Activated CD4-positive, alpha-beta memory T cell treated with anti-CD3 and anti-CD28 coated beads, Interleukin-2, amount 10 ng/mL, durations not matched to agents 7 days and 5 days (primary cell): ENCODE measurements at regions of chr17 and their contacts with region 1.

Region 1: GRCh38 chr17:8222630-8223356 is 12.4 kb upstream of the AURKB start:
- DNase-seq: peak; percentile 90
- H3K4me3 Mint-ChIP-seq: peak overlapping the region; percentile 95
- H3K27ac Mint-ChIP-seq: peak overlapping the region; percentile 99
- H3K4me1 Mint-ChIP-seq: peaks cover 69% of the 10 kb centered on the region
- H3K27me3 Mint-ChIP-seq: peaks cover 2% of the 10 kb centered on the region

Region 2: DNA sequence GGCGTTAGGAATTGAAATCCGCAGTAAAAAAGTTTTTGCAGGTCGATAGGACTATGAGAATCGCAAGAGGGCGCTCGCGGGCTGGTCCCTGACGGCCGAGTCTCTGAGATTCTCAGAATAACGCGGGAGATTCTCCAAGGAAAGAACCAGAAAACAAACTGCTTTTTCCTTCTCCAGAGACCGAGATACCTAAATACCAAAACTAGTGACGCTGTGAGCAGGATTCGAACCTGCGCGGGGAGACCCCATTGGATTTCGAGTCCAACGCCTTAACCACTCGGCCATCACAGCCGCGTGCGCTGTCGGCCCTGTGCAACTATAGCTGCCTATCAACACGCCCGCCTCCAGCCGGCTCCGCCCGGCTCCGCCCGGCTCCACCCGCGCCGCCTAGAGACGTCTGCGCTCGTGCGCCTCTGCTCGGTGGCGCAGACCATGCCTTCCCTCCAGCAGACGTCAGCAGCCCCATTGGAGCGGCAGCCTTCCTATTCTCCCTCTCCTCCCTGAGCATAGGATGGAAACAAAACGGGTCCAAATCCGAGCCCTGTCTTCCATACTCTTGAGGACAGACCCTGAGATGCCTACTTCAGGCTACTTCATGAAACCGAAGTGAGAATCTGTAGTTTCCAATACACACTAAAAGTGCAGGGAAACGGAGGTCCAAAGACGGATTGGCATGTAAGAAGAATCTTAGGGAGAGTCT is 84.0 kb before region 1 on chr17:
- CTCF ChIA-PET with region 1: interaction called, 6 read pairs
- POLR2A ChIA-PET with region 1: interaction called, 12 read pairs
- DNase-seq: peak; percentile 97
- H3K4me3 Mint-ChIP-seq: no peak overlapping the region
- H3K27ac Mint-ChIP-seq: no peak overlapping the region
- H3K4me1 Mint-ChIP-seq: peaks cover 3% of the 10 kb centered on the region
- H3K27me3 Mint-ChIP-seq: peaks cover 3% of the 10 kb centered on the region

Region 3: DNA sequence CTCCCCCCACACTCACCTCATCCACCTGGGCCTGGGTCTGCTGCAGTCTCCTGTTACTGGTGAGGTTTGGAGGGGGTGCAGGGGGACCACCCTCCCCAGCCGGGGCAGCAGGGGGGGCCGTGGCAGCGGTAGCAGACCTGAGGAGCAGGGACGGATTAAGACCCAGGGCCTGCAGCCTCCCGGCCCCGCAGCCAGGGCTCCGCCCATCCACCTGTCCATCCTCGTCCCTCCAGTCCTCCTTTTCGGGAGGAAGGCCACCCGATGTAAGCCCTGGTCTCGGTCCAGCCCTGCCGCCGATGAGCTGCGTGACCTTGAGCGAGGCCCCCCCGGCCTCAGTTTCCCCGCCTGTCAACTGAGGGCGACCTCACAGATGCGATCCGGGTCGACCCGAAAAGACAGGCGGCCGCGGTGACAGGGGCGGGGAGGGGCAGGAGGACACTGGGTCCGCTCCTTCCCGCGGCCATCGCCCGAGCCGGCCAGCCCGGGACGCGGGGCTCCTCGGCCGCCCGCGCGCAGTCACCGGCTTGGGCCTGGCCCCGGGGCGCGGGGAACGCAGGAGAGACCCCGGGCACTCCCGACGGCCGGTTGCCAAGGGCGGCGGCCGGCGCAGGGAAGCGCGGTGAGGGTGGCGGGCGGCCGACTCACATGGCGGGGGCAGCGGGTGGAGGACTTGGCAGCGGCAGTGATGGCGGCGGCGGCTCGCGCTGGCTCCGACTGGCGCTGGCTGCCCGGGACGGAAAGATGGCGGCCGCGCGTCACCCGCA is 60.4 kb before region 1 on chr17 and contains the start of gene VAMP2:
- CTCF ChIA-PET with region 1: interaction called, 3 read pairs
- POLR2A ChIA-PET with region 1: interaction called, 17 read pairs
- DNase-seq: peak; percentile 89
- H3K4me3 Mint-ChIP-seq: peak within 1 kb of the TSS; percentile 81
- H3K27ac Mint-ChIP-seq: peak within 1 kb of the TSS; percentile 98
- H3K4me1 Mint-ChIP-seq: peaks cover 59% of the 10 kb centered on the region
- H3K27me3 Mint-ChIP-seq: no peaks in the 10 kb centered on the region
- total RNA-seq, gene VAMP2: 75.2 to 79.1 TPM

Region 4: GRCh38 chr17:8204761-8205555 is 17.8 kb before region 1 on chr17:
- CTCF ChIA-PET with region 1: interaction called, 14 read pairs
- POLR2A ChIA-PET with region 1: interaction called, 612 read pairs
- DNase-seq: no peak
- H3K4me3 Mint-ChIP-seq: no peak overlapping the region
- H3K27ac Mint-ChIP-seq: no peak overlapping the region
- H3K4me1 Mint-ChIP-seq: peaks cover 47% of the 10 kb centered on the region
- H3K27me3 Mint-ChIP-seq: no peaks in the 10 kb centered on the region

Region 5: GRCh38 chr17:8237175-8237574 is 14.4 kb after region 1 on chr17:
- CTCF ChIA-PET with region 1: interaction called, 8 read pairs
- POLR2A ChIA-PET with region 1: interaction called, 371 read pairs
- DNase-seq: no peak
- H3K4me3 Mint-ChIP-seq: no peak overlapping the region
- H3K27ac Mint-ChIP-seq: no peak overlapping the region
- H3K4me1 Mint-ChIP-seq: peaks cover 11% of the 10 kb centered on the region
- H3K27me3 Mint-ChIP-seq: no peaks in the 10 kb centered on the region

Region 6: GRCh38 chr17:8275421-8276290 is 52.9 kb after region 1 on chr17:
- CTCF ChIA-PET with region 1: no interaction called
- POLR2A ChIA-PET with region 1: no interaction called
- DNase-seq: no peak
- H3K4me3 Mint-ChIP-seq: no peak overlapping the region
- H3K27ac Mint-ChIP-seq: no peak overlapping the region
- H3K4me1 Mint-ChIP-seq: no peaks in the 10 kb centered on the region
- H3K27me3 Mint-ChIP-seq: no peaks in the 10 kb centered on the region

Region 7: DNA sequence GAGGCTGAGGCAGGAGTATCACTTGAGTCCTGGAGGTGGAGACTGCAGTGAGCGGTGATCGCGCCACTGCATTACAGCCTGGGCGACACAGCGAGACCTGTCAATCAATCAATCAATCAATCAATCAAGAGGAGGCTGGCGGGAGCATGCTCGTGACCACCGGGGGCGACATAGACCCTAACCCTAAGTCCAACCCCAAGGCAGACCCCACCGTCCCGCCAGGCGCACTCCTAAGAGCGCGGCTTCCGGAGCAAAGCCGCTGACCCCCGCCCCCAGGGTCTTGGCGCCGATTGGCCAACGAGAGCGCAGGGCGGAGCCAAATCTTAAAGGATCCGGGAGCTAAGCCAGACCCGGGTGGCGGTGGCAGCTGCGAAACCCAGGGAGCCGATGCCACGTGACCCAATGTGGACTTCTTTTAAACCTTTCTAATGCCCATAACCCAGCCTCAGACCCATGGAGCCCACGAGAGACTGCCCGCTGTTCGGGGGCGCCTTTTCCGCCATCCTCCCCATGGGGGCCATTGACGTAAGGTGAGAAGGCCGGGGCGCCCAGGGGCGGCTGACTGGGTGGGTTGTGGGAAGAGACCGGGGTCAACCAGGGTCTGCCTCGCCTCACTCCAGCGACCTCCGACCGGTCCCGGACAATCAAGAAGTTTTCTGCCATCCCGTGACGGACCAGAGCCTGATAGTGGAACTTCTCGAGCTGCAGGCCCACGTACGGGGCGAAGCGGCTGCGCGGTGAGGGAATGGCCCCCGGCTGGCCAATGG is 65.7 kb after region 1 on chr17 and contains the start of gene RANGRF:
- CTCF ChIA-PET with region 1: interaction called, 5 read pairs
- POLR2A ChIA-PET with region 1: interaction called, 41 read pairs
- DNase-seq: peak; percentile 88
- H3K4me3 Mint-ChIP-seq: peak within 1 kb of the TSS; percentile 94
- H3K27ac Mint-ChIP-seq: peak within 1 kb of the TSS; percentile 83
- H3K4me1 Mint-ChIP-seq: peaks cover 65% of the 10 kb centered on the region
- H3K27me3 Mint-ChIP-seq: no peaks in the 10 kb centered on the region
- total RNA-seq, gene RANGRF: 45.4 to 49.4 TPM

Region 8: GRCh38 chr17:8314797-8315763 is 92.3 kb after region 1 on chr17:
- CTCF ChIA-PET with region 1: no interaction called
- POLR2A ChIA-PET with region 1: no interaction called
- DNase-seq: no peak
- H3K4me3 Mint-ChIP-seq: no peak overlapping the region
- H3K27ac Mint-ChIP-seq: no peak overlapping the region
- H3K4me1 Mint-ChIP-seq: peaks cover 2% of the 10 kb centered on the region
- H3K27me3 Mint-ChIP-seq: peaks cover 15% of the 10 kb centered on the region